Mucosa of descending colon (tissue), 3 donors: ENCODE measurements at regions of chr3 and their contacts with region 1.

Region 1: DNA sequence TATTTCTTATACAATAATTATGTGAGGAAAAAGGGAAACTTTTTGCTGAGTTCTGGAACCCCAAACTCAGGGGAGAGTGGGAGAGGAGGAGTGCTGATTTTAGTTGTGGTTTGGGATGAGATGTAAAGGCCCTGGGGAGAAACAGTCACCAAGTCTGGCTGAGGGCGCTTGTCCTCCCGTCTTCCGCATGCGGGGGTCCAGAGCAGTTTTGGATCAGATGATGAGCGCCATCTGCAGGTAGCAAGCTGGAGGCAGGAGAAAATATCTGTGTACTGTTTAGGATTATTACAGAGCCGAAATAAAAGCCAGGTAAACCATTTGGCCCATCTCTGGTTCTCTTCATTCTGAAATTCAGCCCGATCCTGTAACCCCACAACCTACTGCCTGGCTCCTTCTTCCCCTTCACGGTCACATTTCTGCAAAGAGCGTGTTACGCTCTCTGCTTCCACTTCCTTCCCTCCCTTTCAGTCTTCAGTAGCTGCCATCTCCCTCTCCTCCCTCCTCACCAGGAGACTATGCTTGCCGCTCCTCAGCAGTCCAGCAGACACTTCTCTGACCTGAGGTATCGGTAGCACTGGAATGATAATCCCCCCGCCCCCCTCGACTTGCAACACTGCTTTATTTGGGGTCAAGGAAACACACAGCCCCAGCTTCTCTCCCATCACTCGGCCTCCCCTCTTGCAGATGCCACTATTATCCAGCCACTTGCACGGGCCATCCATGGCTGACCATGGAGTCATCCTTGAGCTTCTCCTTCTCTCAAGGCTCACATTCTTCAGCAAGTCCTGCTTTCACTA is 1.4 kb upstream of the PARP14 start:
- DNase-seq: peak; percentile 75 to 92 (median 78)
- ATAC-seq: peak; percentile 75
- H3K4me3 ChIP-seq: no peak overlapping the region
- H3K4me1 ChIP-seq: peaks cover 21% of the 10 kb centered on the region
- CTCF ChIP-seq: peak; percentile 55

Region 2: GRCh38 chr3:122392868-122393844 is 286.1 kb before region 1 on chr3:
- intact Hi-C with region 1: loop called (anchors 10 kb)
- DNase-seq: no peak
- ATAC-seq: peak; percentile 62
- H3K4me3 ChIP-seq: no peak overlapping the region
- H3K4me1 ChIP-seq: no peaks in the 10 kb centered on the region
- CTCF ChIP-seq: peak; percentile 14

Region 3: DNA sequence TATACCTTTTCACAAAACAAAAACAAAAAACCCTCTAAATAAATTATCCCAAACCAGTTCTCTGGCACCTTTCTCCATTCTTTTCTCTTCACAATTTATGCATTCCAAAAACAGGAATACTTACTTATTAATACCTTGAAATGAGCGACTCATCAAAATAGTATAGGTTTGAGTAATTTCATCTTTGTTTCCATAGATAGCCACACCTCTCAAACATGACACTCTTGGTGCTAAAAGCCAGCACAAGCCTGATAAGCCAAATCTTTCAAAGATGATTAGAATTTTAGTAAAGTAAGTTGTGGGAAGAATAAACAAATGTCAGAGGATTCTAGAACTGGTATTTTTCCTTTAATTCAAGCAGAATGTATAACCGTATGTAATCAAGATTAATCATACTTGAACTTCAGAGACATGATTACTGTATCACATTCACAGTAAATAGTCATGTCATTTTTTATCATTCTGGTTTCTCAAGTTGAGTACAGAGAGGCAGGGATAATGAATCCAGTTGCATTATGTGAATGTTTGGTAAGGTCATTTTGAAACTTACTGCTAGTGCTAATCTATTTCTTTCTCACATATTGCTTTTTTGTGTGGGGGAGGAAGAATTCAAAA is 251.3 kb before region 1 on chr3:
- intact Hi-C with region 1: no loop called
- DNase-seq: no peak
- ATAC-seq: no peak
- H3K4me3 ChIP-seq: no peak overlapping the region
- H3K4me1 ChIP-seq: no peaks in the 10 kb centered on the region
- CTCF ChIP-seq: no peak

Region 4: DNA sequence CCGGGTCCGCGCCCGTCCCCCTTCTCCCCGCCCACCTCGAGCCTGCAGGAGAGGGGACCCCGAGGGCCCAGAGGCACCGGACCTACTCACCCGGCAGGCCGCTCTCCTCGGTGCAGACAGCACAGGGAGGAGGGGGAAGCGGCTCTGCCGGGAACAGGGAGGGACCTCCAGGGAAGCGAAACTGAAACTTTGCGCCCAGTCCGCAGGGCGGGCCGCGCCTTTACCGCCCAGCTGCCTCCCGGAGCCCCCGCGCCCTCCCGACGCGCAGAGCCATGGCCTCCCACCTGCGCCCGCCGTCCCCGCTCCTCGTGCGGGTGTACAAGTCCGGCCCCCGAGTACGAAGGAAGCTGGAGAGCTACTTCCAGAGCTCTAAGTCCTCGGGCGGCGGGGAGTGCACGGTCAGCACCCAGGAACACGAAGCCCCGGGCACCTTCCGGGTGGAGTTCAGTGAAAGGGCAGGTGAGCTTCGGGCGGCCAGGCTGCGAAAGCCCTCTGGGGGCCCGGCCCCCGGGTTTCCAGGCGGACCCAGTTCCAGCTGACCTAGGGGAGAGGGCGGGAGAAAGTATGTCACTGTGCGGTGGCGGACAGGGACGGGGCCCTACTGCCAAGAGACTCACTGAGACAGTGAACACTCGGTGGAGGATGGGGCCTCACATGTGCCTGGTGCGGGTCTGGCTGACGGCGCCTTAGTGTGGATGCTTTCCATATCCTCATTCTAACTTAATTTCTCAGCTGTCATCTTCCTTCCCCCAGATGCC is 114.9 kb before region 1 on chr3 and contains the starts of genes DTX3L and PARP9:
- intact Hi-C with region 1: loop called (anchors 5 kb)
- DNase-seq: peak; percentile 89 to 93 (median 90)
- ATAC-seq: peak; percentile 99
- H3K4me3 ChIP-seq: peak within 1 kb of the TSS; percentile 52
- H3K4me1 ChIP-seq: peaks cover 13% of the 10 kb centered on the region
- CTCF ChIP-seq: no peak
- total RNA-seq, gene DTX3L: 56.0 to 68.3 (median 59.9) TPM
- total RNA-seq, gene PARP9: 32.2 to 51.1 (median 44.7) TPM

Region 5: GRCh38 chr3:122873741-122874515 is 194.6 kb after region 1 on chr3:
- intact Hi-C with region 1: no loop called
- DNase-seq: no peak
- ATAC-seq: no peak
- H3K4me3 ChIP-seq: no peak overlapping the region
- H3K4me1 ChIP-seq: no peaks in the 10 kb centered on the region
- CTCF ChIP-seq: no peak